Esophagus squamous epithelium (tissue), 5 donors: ENCODE measurements at regions of chr2 and their contacts with region 1.

Region 1: GRCh38 chr2:68925295-68925896 is 27.3 kb downstream of the GKN2 start:
- DNase-seq: no peak
- H3K4me3 ChIP-seq: no peak overlapping the region
- H3K27ac ChIP-seq: no peak overlapping the region
- H3K4me1 ChIP-seq: no peaks in the 10 kb centered on the region
- H3K27me3 ChIP-seq: no peaks in the 10 kb centered on the region
- CTCF ChIP-seq: peak; percentile 85 to 97 (median 92)
- POLR2A ChIP-seq: no peak

Region 2: DNA sequence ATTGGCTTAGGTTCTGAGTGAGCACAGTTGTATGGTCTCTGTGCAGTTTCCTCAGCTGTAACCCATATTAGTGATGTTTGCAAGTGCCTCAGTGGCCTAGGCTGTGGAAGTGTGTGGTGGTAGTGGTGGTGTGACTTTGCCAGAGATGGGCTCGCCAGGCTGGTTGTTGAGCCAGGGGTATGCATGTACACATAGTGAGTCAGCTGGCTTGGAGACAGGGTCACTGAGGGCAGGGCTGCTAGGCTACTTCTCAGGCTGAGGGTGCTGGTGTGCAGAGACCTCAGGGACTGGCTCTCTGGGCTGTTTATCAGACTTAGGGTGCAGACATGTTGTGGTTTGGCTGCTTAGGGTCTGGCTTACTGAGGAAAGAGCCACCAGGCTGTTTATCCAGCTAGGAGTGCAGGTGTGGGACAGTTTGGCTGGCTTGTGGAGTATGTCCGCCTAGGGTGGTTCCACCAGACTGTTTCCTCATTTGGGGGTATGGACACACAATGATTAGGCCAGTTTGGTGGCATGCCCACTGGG is 443.0 kb before region 1 on chr2:
- intact Hi-C with region 1: loop called (anchors 5 kb)
- DNase-seq: no peak
- H3K4me3 ChIP-seq: no peak overlapping the region
- H3K27ac ChIP-seq: no peak overlapping the region
- H3K4me1 ChIP-seq: peaks cover 0 to 6% (median 0%) of the 10 kb centered on the region in 3 donors
- H3K27me3 ChIP-seq: no peaks in the 10 kb centered on the region
- CTCF ChIP-seq: no peak
- POLR2A ChIP-seq: no peak

Region 3: DNA sequence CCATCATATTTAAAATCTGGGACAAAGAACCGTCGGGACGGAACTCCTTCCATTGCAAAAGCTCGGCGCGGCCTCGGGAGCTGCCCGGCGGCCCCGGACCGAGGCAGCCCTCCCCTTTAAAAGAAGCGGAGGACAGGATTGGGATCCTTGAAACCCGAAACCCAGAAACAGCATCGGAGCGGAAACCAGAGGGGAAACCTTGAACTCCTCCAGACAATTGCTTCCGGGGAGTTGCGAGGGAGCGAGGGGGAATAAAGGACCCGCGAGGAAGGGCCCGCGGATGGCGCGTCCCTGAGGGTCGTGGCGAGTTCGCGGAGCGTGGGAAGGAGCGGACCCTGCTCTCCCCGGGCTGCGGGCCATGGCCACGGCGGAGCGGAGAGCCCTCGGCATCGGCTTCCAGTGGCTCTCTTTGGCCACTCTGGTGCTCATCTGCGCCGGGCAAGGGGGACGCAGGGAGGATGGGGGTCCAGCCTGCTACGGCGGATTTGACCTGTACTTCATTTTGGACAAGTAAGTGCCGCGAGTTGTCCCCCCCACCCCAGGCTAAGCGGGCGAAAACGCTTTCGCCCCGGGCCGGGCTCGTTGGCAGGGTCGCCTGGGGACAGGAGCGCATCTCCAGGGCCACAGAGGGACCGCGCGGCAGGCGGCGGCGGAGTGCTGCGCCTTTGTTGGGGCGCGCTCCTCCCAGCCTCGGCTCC is 87.9 kb after region 1 on chr2 and contains the start of gene ANTXR1:
- intact Hi-C with region 1: no loop called
- DNase-seq: no peak
- H3K4me3 ChIP-seq: peak within 1 kb of the TSS; percentile 47 to 87 (median 76)
- H3K27ac ChIP-seq: peak within 1 kb of the TSS; percentile 63 to 91 (median 88)
- H3K4me1 ChIP-seq: peaks cover 0 to 57% (median 23%) of the 10 kb centered on the region in 3 donors
- H3K27me3 ChIP-seq: peaks cover 0 to 22% (median 0%) of the 10 kb centered on the region in 4 donors
- CTCF ChIP-seq: peak in 1 of 6 experiments; percentile 19
- POLR2A ChIP-seq: peak in 1 of 4 donors; percentile 1
- total RNA-seq, gene ANTXR1: 7.8 to 50.9 (median 17.3) TPM